Dorsolateral prefrontal cortex (tissue), 120 donors: ENCODE measurements at regions of chrX and their contacts with region 1.

Region 1: GRCh38 chrX:9464435-9465371 is at the start of gene TBL1X:
- DNase-seq: peak in 4 of 10 donors; percentile 14 to 63 (median 40)
- H3K4me3 ChIP-seq: peak within 1 kb of the TSS; percentile 38 to 79 (median 63)
- H3K27ac ChIP-seq: peak within 1 kb of the TSS in 55 of 59 donors; percentile 32 to 88 (median 77)
- H3K27me3 ChIP-seq: peaks cover 0 to 85% (median 34%) of the 10 kb centered on the region in 45 donors
- CTCF ChIP-seq: peak in 1 of 56 donors; percentile 17
- total RNA-seq, gene TBL1X: 12.6 to 42.3 (median 21.6) TPM

Region 2: GRCh38 chrX:9091258-9091657 is 373.4 kb before region 1 on chrX:
- intact Hi-C with region 1: no loop called
- DNase-seq: no peak
- H3K4me3 ChIP-seq: no peak overlapping the region
- H3K27ac ChIP-seq: no peak overlapping the region
- H3K27me3 ChIP-seq: peaks cover 0 to 60% (median 7%) of the 10 kb centered on the region in 45 donors
- CTCF ChIP-seq: no peak

Region 3: DNA sequence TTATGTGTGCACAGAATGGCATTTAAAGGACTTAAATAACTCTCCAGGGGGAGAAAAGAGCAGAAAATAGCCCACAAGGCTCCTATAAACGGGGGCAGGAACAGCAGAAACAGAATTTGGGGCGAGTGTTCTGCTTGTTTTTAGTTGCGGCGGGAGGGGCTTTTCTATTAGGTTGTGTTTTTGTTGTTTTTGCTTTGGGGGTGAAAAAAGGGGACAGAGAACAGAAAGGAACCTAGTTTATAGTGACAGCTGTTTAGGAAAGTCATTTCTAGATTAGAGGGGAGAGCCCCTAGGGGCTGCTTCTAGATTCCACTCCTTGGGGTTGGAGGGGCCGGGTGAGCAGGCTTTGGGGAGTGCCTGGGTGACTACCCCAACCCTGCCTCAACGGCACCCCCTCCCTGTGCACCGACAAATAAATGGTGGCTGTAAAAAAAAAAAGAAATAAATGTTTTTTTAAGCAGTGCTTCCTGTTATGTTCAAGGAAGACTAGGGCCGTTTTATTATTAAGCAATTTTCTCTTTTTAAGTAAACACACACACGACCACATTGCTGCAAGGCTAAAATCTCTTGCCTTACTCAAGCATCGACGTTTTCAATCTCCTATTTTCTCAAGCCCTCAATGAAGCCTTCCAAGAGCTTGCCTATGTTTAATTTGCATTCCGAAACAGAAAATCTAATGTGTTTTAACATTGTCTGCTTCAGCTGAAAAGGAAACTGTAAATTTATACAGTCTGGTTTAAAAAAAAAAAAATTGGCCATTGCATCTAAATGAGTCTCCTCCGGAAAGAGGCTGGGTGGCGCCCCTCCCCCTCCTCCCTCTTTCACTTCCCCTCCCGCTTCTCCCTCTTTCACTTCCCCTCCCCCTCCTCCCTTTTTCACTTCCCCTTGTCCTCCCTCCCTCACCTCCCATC is 123.2 kb before region 1 on chrX:
- intact Hi-C with region 1: loop called (anchors 1 kb)
- DNase-seq: peak in 6 of 10 donors; percentile 44 to 56 (median 47)
- H3K4me3 ChIP-seq: peak overlapping the region in 48 of 59 donors; percentile 1 to 57 (median 36)
- H3K27ac ChIP-seq: peak overlapping the region in 57 of 59 donors; percentile 1 to 88 (median 78)
- H3K27me3 ChIP-seq: peaks cover 0 to 44% (median 5%) of the 10 kb centered on the region in 45 donors
- CTCF ChIP-seq: peak in 5 of 56 donors; percentile 6 to 20 (median 16)

Region 4: GRCh38 chrX:9420538-9421265 is 44.0 kb before region 1 on chrX:
- intact Hi-C with region 1: no loop called
- DNase-seq: no peak
- H3K4me3 ChIP-seq: no peak overlapping the region
- H3K27ac ChIP-seq: no peak overlapping the region
- H3K27me3 ChIP-seq: peaks cover 0 to 45% (median 7%) of the 10 kb centered on the region in 45 donors
- CTCF ChIP-seq: no peak

Region 5: GRCh38 chrX:9530848-9531274 is 66.2 kb after region 1 on chrX:
- intact Hi-C with region 1: loop called (anchors 5 to 10 kb)
- DNase-seq: peak in 9 of 10 donors; percentile 38 to 71 (median 58)
- H3K4me3 ChIP-seq: peak overlapping the region in 44 of 59 donors; percentile 1 to 51 (median 30)
- H3K27ac ChIP-seq: peak overlapping the region in 3 of 59 donors; percentile 9 to 30 (median 24)
- H3K27me3 ChIP-seq: peaks cover 0 to 75% (median 22%) of the 10 kb centered on the region in 45 donors
- CTCF ChIP-seq: no peak

Region 6: GRCh38 chrX:9677098-9677739 is 212.5 kb after region 1 on chrX:
- intact Hi-C with region 1: loop called in 1 of 2 experiments (anchors 10 kb)
- DNase-seq: no peak
- H3K4me3 ChIP-seq: no peak overlapping the region
- H3K27ac ChIP-seq: peak overlapping the region in 1 of 59 donors; percentile 3
- H3K27me3 ChIP-seq: peaks cover 0 to 38% (median 0%) of the 10 kb centered on the region in 45 donors
- CTCF ChIP-seq: no peak